MCF 10A (cell line): ENCODE measurements at regions of chr19 and their contacts with region 1.

Region 1: GRCh38 chr19:8355631-8356402 is 8.1 kb upstream of the ANGPTL4 start:
- DNase-seq: peak; percentile 99
- H3K4me3 Mint-ChIP-seq: no peak overlapping the region
- H3K27ac Mint-ChIP-seq: peak overlapping the region; percentile 21
- H3K4me1 Mint-ChIP-seq: peaks cover 20% of the 10 kb centered on the region
- H3K27me3 Mint-ChIP-seq: no peaks in the 10 kb centered on the region
- CTCF ChIP-seq: no peak

Region 2: GRCh38 chr19:7590261-7590660 is 765.6 kb before region 1 on chr19:
- CTCF ChIA-PET with region 1: no interaction called
- POLR2A ChIA-PET with region 1: no interaction called
- intact Hi-C with region 1: no loop called
- DNase-seq: no peak
- H3K4me3 Mint-ChIP-seq: no peak overlapping the region
- H3K27ac Mint-ChIP-seq: no peak overlapping the region
- H3K4me1 Mint-ChIP-seq: peaks cover 9% of the 10 kb centered on the region
- H3K27me3 Mint-ChIP-seq: no peaks in the 10 kb centered on the region
- CTCF ChIP-seq: no peak

Region 3: DNA sequence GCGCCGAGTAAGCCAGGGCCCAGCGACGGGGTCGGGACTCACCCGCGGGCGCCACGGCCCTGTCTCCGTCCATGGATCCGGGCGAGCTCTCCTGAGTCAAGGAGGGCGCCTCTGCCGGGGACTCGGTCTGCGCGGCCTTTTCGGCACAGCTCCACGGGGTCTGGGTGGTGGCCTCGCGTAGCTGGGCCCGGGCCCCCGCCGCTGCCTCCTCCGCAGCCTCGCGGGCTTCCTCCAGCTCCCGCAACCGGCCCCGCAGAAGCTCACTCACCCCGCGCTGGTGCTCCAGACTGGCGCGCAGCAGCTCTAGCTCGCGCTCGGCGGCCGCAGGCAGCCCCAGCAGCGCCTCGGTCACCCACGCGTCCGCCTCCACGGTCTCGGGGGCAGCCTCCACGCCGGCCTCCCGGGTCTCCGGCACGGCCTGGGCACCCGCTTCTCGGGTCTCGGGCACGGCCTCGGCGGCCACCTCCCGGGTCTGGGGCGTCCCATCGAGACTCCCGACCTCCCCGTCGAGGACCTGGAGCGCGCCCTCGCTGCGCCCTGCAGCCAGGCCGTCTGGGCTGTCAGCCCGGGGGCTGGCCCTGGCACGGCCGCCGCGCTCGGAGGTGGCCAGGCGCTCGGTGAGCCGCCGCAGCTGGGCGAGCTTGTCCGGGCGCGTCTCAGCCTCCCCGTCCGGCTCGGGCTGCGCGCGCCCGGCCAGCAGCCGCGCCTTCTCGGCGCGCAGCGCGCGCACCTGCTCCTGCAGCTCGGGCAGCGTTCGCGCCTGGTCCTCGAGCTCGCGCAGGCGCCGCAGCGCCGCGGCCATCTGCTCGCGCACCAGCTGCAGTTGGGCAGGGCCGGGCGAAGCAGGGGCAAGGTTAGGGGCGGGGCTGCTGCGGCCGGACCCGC is 21.1 kb before region 1 on chr19:
- CTCF ChIA-PET with region 1: interaction called, 13 read pairs
- POLR2A ChIA-PET with region 1: interaction called, 8 read pairs
- intact Hi-C with region 1: no loop called
- DNase-seq: peak; percentile 71
- H3K4me3 Mint-ChIP-seq: peak overlapping the region; percentile 50
- H3K27ac Mint-ChIP-seq: no peak overlapping the region
- H3K4me1 Mint-ChIP-seq: no peaks in the 10 kb centered on the region
- H3K27me3 Mint-ChIP-seq: no peaks in the 10 kb centered on the region
- CTCF ChIP-seq: no peak

Region 4: GRCh38 chr19:8389891-8390616 is 34.2 kb after region 1 on chr19 and contains the start of gene RAB11B:
- CTCF ChIA-PET with region 1: interaction called, 72 read pairs
- POLR2A ChIA-PET with region 1: interaction called, 6 read pairs
- intact Hi-C with region 1: no loop called
- DNase-seq: peak; percentile 100
- H3K4me3 Mint-ChIP-seq: peak within 1 kb of the TSS; percentile 91
- H3K27ac Mint-ChIP-seq: peak within 1 kb of the TSS; percentile 96
- H3K4me1 Mint-ChIP-seq: peaks cover 13% of the 10 kb centered on the region
- H3K27me3 Mint-ChIP-seq: no peaks in the 10 kb centered on the region
- CTCF ChIP-seq: no peak
- total RNA-seq, gene RAB11B: 67.2 and 73.3 TPM in 2 replicates

Region 5: GRCh38 chr19:8412783-8413628 is 57.2 kb after region 1 on chr19 and contains the start of gene MARCHF2:
- CTCF ChIA-PET with region 1: interaction called, 12 read pairs
- POLR2A ChIA-PET with region 1: interaction called, 4 read pairs
- intact Hi-C with region 1: no loop called
- DNase-seq: peak; percentile 96
- H3K4me3 Mint-ChIP-seq: peak within 1 kb of the TSS; percentile 41
- H3K27ac Mint-ChIP-seq: no peak within 1 kb of the TSS
- H3K4me1 Mint-ChIP-seq: no peaks in the 10 kb centered on the region
- H3K27me3 Mint-ChIP-seq: no peaks in the 10 kb centered on the region
- CTCF ChIP-seq: peak; percentile 61
- total RNA-seq, gene MARCHF2: 8.3 and 11.5 TPM in 2 replicates

Region 6: DNA sequence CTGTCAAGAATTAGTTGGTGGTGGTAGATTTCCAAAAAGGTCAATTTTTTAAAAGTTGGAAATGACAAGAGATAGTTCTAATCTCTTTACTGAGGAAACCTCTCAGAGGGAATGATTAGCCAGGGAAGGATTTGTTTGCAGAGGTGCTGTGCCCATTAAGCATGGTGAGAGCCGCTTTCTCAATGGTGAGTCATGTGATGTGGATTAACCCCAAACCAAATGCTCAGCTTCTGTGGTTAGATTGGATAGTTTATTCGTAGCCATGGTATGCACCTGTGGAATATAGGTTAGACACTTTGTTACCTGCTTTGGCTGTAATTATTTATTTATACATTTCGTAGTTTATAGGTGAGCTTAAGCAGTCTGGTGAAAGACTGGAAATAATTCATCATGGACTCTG is 96.1 kb after region 1 on chr19:
- CTCF ChIA-PET with region 1: interaction called, 37 read pairs
- POLR2A ChIA-PET with region 1: no interaction called
- intact Hi-C with region 1: loop called (anchors 10 kb)
- DNase-seq: peak; percentile 82
- H3K4me3 Mint-ChIP-seq: peak overlapping the region; percentile 31
- H3K27ac Mint-ChIP-seq: no peak overlapping the region
- H3K4me1 Mint-ChIP-seq: peaks cover 41% of the 10 kb centered on the region
- H3K27me3 Mint-ChIP-seq: no peaks in the 10 kb centered on the region
- CTCF ChIP-seq: no peak

Region 7: DNA sequence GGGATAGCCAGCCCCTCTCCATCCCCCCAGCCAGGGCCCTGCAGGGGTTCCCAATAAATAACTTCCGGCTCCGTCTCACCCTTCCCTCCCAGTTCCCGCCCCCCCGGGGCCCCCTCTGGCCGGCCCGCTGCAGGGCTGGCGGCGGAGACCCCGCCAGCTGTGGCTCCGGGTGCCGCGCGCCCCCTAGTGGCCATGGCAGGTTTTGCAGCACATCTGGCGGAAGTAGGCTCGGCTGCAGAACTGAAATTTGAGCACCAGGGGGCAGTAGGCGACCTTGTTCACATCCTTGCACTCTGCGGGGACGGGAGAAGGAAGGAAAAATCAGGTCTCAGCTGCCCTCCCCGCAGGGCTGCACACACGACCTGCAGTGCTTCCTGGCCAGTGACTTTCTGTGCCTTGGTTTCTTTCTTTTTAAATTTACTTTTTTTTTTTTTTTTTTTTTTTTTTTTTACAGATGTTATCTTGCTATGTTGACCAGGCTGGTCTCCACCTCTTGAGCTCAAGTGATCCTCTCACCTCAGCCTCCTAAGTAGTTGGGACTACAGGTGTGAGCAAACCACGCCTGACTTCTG is 225.0 kb after region 1 on chr19:
- CTCF ChIA-PET with region 1: interaction called, 45 read pairs
- POLR2A ChIA-PET with region 1: no interaction called
- intact Hi-C with region 1: loop called (anchors 2 kb)
- DNase-seq: peak; percentile 82
- H3K4me3 Mint-ChIP-seq: no peak overlapping the region
- H3K27ac Mint-ChIP-seq: no peak overlapping the region
- H3K4me1 Mint-ChIP-seq: peaks cover 10% of the 10 kb centered on the region
- H3K27me3 Mint-ChIP-seq: peaks cover 10% of the 10 kb centered on the region
- CTCF ChIP-seq: peak; percentile 99